ENCODE measurements at regions of chrX and their contacts with region 1.

Region 1: GRCh38 chrX:129606918-129607317 is 47.8 kb downstream of the APLN start:
- DNase-seq: peak in 1 of 2 donors; percentile 57
- ATAC-seq: peak in 7 of 8 donors; percentile 27 to 76 (median 56)
- H3K4me3 ChIP-seq: no peak overlapping the region
- H3K27ac ChIP-seq: no peak overlapping the region
- H3K4me1 ChIP-seq: peaks cover 0 to 18% (median 7%) of the 10 kb centered on the region in 9 donors
- H3K27me3 ChIP-seq: peaks cover 0 to 9% (median 0%) of the 10 kb centered on the region in 7 donors
- CTCF ChIP-seq: peak; percentile 41 to 75 (median 71)

Region 2: DNA sequence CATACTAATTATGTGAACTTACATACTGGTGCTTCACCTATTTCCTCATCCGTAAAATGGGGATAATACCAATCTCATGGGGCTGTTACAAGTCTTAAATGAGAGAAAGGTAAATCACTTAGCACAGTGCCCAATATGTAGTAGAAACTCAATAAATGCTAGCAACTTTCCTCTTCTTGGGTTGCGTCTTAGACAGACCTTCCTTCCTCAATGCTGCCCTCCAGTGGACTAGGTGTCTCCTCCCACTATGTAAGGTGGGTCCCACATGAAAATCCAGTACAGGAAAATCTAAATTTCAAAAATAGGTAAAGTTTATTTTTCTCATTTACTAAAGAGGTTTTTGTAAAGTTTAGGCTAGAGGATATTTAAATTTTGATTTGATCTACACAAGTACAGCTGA is 216.2 kb after region 1 on chrX:
- intact Hi-C with region 1: loop called in 5 of 10 experiments (anchors 2 to 10 kb)
- DNase-seq: peak in 1 of 2 donors; percentile 20
- ATAC-seq: no peak
- H3K4me3 ChIP-seq: no peak overlapping the region
- H3K27ac ChIP-seq: peak overlapping the region in 1 of 10 donors; percentile 23
- H3K4me1 ChIP-seq: no peaks in the 10 kb centered on the region
- H3K27me3 ChIP-seq: no peaks in the 10 kb centered on the region
- CTCF ChIP-seq: peak in 7 of 9 donors; percentile 48 to 67 (median 55)

Region 3: DNA sequence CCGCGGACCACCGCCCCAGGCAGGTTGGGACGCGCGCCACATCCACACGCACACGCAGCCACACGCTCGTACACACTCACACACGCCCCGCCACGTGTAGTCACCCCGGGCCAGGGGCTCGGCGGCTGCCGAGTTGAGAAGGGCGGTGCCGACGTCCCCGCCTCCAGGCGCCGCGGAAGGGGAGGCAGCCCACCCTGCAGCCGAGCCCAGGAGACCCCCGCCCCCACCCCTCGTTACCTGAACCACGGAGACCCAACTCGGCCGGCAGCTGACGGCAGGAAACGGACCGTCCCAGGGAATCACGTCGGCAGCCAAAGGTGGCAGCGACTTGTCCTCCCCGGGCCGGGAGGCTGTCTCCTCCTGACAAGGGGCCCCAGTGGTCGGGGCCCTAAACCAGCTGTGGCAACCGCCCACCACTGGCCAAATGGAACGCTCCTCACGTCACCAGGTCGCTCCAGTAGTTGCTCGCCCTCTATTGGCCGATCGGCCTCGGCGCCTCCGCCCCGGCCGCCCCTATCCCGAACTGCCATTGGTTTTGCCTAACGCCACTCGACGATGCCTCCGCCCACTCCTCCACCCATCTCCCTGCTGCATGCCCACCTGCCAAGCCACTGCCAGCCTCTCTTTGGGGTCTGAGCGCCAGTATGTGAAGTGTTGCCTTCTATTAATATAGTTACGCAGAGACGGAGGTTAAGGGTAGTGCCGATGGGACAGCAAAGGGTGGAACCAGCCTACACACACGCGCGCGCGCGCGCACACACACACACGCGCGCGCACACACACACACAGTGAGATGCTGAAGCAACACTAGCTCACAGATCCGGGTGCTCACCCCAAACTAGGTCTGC is 236.8 kb after region 1 on chrX and contains the start of gene ZDHHC9:
- intact Hi-C with region 1: loop called in 2 of 10 experiments (anchors 10 kb)
- DNase-seq: peak; percentile 88 to 90
- ATAC-seq: peak; percentile 94 to 99 (median 97)
- H3K4me3 ChIP-seq: peak within 1 kb of the TSS; percentile 49 to 84 (median 70)
- H3K27ac ChIP-seq: peak within 1 kb of the TSS; percentile 13 to 83 (median 76)
- H3K4me1 ChIP-seq: peaks cover 0 to 12% (median 0%) of the 10 kb centered on the region in 9 donors
- H3K27me3 ChIP-seq: peaks cover 0 to 14% (median 0%) of the 10 kb centered on the region in 7 donors
- CTCF ChIP-seq: peak in 4 of 9 donors; percentile 2 to 25 (median 14)
- total RNA-seq, gene ZDHHC9: 8.3 to 22.8 (median 11.4) TPM

Region 4: GRCh38 chrX:129925305-129926092 is 318.6 kb after region 1 on chrX:
- intact Hi-C with region 1: loop called in 2 of 10 experiments (anchors 10 kb)
- DNase-seq: peak; percentile 40 to 74
- ATAC-seq: peak; percentile 71 to 88 (median 82)
- H3K4me3 ChIP-seq: no peak overlapping the region
- H3K27ac ChIP-seq: no peak overlapping the region
- H3K4me1 ChIP-seq: no peaks in the 10 kb centered on the region
- H3K27me3 ChIP-seq: no peaks in the 10 kb centered on the region
- CTCF ChIP-seq: peak; percentile 44 to 73 (median 67)

Region 5: DNA sequence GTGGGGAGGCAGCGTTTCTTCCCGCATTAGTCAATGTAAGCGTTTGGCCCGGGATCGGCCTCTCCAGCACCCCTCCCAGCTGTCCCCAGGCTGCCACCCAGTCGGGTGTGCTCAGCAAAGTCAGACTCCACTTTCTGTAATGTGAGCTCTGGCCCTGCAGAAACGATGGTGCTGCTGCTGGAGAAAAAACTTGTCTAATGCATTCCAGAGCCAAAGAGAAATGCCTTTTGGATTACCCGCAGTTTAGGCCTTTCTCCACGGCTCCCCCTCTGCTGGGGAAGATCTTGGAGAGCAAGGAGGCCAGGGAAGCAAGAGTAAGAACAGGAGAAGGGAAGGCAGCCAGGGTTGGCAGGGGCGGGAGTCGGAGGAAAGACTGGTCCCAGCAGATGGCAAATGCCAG is 448.2 kb after region 1 on chrX:
- intact Hi-C with region 1: loop called in 6 of 10 experiments (anchors 2 to 10 kb)
- DNase-seq: no peak
- ATAC-seq: peak in 5 of 8 donors; percentile 28 to 50 (median 34)
- H3K4me3 ChIP-seq: no peak overlapping the region
- H3K27ac ChIP-seq: no peak overlapping the region
- H3K4me1 ChIP-seq: peaks cover 0 to 6% (median 0%) of the 10 kb centered on the region in 9 donors
- H3K27me3 ChIP-seq: no peaks in the 10 kb centered on the region
- CTCF ChIP-seq: no peak

Region 6: GRCh38 chrX:130196466-130196865 is 589.5 kb after region 1 on chrX:
- intact Hi-C with region 1: loop called in 3 of 10 experiments (anchors 5 to 10 kb)
- DNase-seq: no peak
- ATAC-seq: no peak
- H3K4me3 ChIP-seq: no peak overlapping the region
- H3K27ac ChIP-seq: no peak overlapping the region
- H3K4me1 ChIP-seq: no peaks in the 10 kb centered on the region
- H3K27me3 ChIP-seq: no peaks in the 10 kb centered on the region
- CTCF ChIP-seq: no peak